Left colon (tissue), 2 donors: ENCODE measurements at regions of chr1 and their contacts with region 1.

Region 1: GRCh38 chr1:40338745-40339424 is 21.8 kb upstream of the COL9A2 start:
- DNase-seq: peak; percentile 70 to 84
- ATAC-seq: peak; percentile 90

Region 2: DNA sequence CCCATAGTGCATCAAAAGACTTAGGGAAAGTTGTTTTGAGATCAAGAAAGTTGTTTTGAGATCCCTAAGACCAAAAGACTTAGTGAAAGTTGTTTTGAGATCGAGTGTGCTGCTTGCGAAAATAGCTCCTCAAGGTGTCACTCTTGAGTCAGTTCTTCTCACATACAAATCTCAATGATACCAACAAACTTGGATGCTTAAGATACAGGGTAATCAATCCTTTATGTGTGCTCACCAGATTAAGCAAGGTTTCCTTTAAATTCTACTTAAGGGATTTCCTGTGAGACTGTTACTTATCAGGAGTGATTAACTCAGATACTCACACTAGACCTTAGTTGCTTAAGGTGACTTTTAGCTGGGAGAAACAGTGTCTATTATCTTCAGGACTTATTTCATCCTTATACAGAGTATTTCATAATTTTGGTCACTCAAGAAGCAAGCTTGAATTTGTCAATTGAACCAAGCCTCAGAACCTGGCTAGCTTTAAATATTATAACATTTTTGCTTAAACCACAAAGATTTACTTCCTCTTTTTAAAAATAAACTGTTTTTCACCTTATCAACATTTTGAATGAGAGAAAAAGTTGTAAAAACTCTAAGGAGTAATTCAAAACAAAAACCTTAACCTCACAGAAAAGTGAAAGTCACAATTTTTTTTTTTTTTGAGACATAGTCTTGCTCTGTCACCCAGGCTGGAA is 185.7 kb before region 1 on chr1:
- intact Hi-C with region 1: loop called in 1 of 2 experiments (anchors 5 kb)
- DNase-seq: no peak
- ATAC-seq: peak; percentile 64

Region 3: GRCh38 chr1:40421431-40422384 is 82.8 kb after region 1 on chr1:
- intact Hi-C with region 1: no loop called
- DNase-seq: no peak
- ATAC-seq: no peak